Gastrocnemius medialis (tissue), 4 donors: ENCODE measurements at regions of chr2 and their contacts with region 1.

Region 1: DNA sequence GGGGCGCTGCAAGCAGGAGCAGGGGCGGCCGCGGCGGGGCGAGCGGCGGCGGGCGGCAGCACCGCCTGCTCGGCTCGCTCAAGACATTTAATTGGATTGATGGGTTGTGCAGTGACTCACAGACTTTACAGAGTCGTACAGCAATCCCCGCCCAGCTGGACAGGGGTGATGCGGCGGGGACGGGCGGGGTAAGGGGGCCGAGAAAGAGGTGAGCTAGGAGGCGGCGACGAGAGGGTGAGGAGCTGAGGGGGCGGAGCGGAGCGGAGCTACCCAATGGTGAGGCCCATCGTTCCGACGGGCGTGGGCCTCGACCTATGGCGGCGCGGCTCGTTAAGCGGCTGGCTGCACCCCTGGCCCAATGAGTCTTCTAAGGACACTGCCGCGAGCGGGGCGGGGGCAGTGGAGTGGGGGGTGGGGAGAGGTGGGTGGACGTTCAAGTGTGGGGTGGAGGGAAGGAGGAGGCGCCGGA is 97.1 kb upstream of the SERTAD2 start:
- DNase-seq: peak in 1 of 2 donors; percentile 100
- ATAC-seq: peak; percentile 81 to 88
- H3K4me3 ChIP-seq: peak overlapping the region; percentile 73 to 82 (median 77)
- H3K27ac ChIP-seq: peak overlapping the region; percentile 93 to 96 (median 95)
- H3K4me1 ChIP-seq: peaks cover 12 to 18% of the 10 kb centered on the region in 2 donors
- H3K27me3 ChIP-seq: no peaks in the 10 kb centered on the region
- CTCF ChIP-seq: peak in 1 of 5 experiments; percentile 6
- POLR2A ChIP-seq: peak; percentile 96 to 97

Region 2: GRCh38 chr2:64523666-64524603 is 226.9 kb before region 1 on chr2 and contains the start of gene AFTPH:
- in situ Hi-C with region 1: no loop called
- intact Hi-C with region 1: loop called (anchors 5 kb)
- DNase-seq: peak; percentile 99
- ATAC-seq: peak; percentile 94 to 95
- H3K4me3 ChIP-seq: peak within 1 kb of the TSS; percentile 86 to 97 (median 90)
- H3K27ac ChIP-seq: peak within 1 kb of the TSS; percentile 91 to 97 (median 94)
- H3K4me1 ChIP-seq: peaks cover 29 to 32% of the 10 kb centered on the region in 2 donors
- H3K27me3 ChIP-seq: no peaks in the 10 kb centered on the region
- CTCF ChIP-seq: no peak
- POLR2A ChIP-seq: peak; percentile 93 to 97
- total RNA-seq, gene AFTPH: 13.9 to 18.1 (median 14.8) TPM

Region 3: GRCh38 chr2:64653349-64654062 is 97.3 kb before region 1 on chr2 and contains the start of gene SERTAD2:
- in situ Hi-C with region 1: loop called in 3 of 4 experiments (anchors 5 to 10 kb)
- intact Hi-C with region 1: loop called (anchors 1 kb)
- DNase-seq: peak; percentile 74 to 84
- ATAC-seq: peak; percentile 64 to 70
- H3K4me3 ChIP-seq: peak within 1 kb of the TSS; percentile 87 to 95 (median 90)
- H3K27ac ChIP-seq: peak within 1 kb of the TSS; percentile 96 to 100 (median 99)
- H3K4me1 ChIP-seq: peaks cover 41% of the 10 kb centered on the region in 2 donors
- H3K27me3 ChIP-seq: no peaks in the 10 kb centered on the region
- CTCF ChIP-seq: peak in 2 of 5 experiments; percentile 17 to 35
- POLR2A ChIP-seq: peak; percentile 92 to 95
- total RNA-seq, gene SERTAD2: 7.3 to 10.6 (median 8.7) TPM

Region 4: DNA sequence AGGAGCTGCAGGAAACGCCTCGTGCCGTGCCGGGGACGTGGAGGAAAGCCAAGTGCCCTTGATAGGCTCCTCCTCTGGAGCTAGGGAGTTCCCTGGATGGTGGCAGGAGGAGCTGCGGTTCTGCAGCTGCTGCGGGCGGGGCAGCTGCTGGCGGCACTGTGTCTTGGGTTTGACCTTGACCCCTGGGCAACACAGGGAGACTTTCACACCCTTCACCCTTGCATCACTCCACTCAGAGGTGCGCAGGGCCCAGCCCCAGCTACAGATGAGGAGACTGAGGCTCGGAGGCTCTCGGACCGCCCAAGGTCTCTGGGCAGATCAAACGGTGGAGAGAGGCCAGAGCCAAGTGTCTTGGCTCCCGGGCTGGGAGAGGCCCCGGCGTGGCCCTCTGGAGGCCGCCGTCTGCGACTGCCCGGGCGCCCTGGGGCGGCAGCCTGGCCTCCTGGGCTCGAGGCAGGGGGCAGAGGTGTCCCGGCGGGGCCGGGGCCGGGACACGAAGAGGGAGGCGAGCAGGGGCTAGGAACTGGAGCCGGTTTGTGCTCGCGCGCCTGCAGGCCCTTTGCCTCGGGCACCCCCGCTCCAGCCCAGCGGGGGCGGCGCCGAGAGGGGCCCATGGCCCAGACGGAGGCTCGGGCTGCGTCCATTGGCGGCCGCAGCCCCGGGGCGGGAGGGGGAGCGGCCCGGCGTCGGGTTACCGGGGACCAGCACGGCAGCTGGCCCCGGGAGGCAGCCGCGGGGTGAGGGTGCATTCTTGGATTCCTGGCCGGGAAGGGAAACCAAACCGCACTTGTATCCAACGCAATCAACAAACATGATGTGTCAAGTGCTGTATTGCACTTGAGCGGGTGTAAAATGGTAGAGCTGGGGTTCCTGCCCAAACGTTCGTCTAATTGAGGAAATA is 108.7 kb after region 1 on chr2:
- in situ Hi-C with region 1: loop called in 2 of 4 experiments (anchors 5 to 10 kb)
- intact Hi-C with region 1: loop called (anchors 1 kb)
- DNase-seq: peak; percentile 93 to 98
- ATAC-seq: peak; percentile 85 to 86
- H3K4me3 ChIP-seq: peak overlapping the region; percentile 55 to 74 (median 58)
- H3K27ac ChIP-seq: peak overlapping the region; percentile 87 to 98 (median 96)
- H3K4me1 ChIP-seq: peaks cover 26 to 38% of the 10 kb centered on the region in 2 donors
- H3K27me3 ChIP-seq: no peaks in the 10 kb centered on the region
- CTCF ChIP-seq: peak in 2 of 5 experiments; percentile 8 to 26
- POLR2A ChIP-seq: peak; percentile 32 to 54

Region 5: GRCh38 chr2:65056215-65057053 is 305.6 kb after region 1 on chr2 and contains the start of gene CEP68:
- in situ Hi-C with region 1: no loop called
- intact Hi-C with region 1: loop called (anchors 5 kb)
- DNase-seq: peak; percentile 98
- ATAC-seq: peak; percentile 93
- H3K4me3 ChIP-seq: peak within 1 kb of the TSS; percentile 70 to 90 (median 86)
- H3K27ac ChIP-seq: peak within 1 kb of the TSS; percentile 90 to 96 (median 92)
- H3K4me1 ChIP-seq: peaks cover 48 to 50% of the 10 kb centered on the region in 2 donors
- H3K27me3 ChIP-seq: no peaks in the 10 kb centered on the region
- CTCF ChIP-seq: peak in 3 of 5 experiments; percentile 9 to 26 (median 19)
- POLR2A ChIP-seq: peak; percentile 96 to 99
- total RNA-seq, gene CEP68: 21.4 to 48.0 (median 35.2) TPM